ENCODE measurements at regions of chr19 and their contacts with region 1.

Region 1: GRCh38 chr19:24099829-24100228 is 12.8 kb downstream of the ZNF254 start:
- DNase-seq: no peak
- H3K4me3 ChIP-seq: no peak overlapping the region
- H3K27ac ChIP-seq: no peak overlapping the region
- H3K4me1 ChIP-seq: no peaks in the 10 kb centered on the region; a peak in 1 of 7 replicates
- H3K27me3 ChIP-seq: no peaks in the 10 kb centered on the region
- CTCF ChIP-seq: no peak
- EP300 ChIP-seq: no peak
- POLR2A ChIP-seq: no peak
- RAD21 ChIP-seq: no peak

Region 2: GRCh38 chr19:24086974-24087595 is 12.7 kb before region 1 on chr19 and contains the start of gene ZNF254:
- CTCF ChIA-PET with region 1: interaction called, 4 read pairs
- POLR2A ChIA-PET with region 1: interaction called, 23 read pairs
- DNase-seq: peak; percentile 72 to 82
- H3K4me3 ChIP-seq: peak within 1 kb of the TSS; percentile 55 to 94 (median 66)
- H3K27ac ChIP-seq: peak within 1 kb of the TSS; percentile 88
- H3K4me1 ChIP-seq: no peaks in the 10 kb centered on the region
- H3K27me3 ChIP-seq: no peaks in the 10 kb centered on the region
- CTCF ChIP-seq: no peak
- EP300 ChIP-seq: no peak
- POLR2A ChIP-seq: peak; percentile 22 to 89
- RAD21 ChIP-seq: no peak
- total RNA-seq, gene ZNF254: 21.7 and 22.0 TPM in 2 replicates